Adrenal gland (tissue), 19 donors: ENCODE measurements at regions of chr21 and their contacts with region 1.

Region 1: DNA sequence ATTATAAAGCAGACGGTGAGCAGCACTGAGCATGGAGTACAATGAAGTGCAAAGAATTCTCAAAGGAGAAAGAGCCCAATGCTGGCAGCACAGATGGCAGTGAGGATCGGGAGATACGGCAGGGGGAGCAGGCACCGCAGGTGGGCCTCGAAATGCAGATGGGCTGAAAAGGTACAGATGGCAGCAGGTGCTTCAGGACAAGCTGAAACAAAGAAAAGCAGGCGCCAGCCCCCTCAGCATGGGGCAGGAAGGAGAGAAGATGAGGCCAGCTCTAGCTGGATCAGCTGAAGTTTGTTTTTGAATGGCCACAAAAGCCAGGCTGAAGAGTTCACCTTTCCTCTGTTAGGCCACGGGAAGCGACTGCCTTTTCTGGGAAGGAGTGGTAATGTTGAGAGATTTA is 7.7 kb downstream of the CFAP298 start:
- DNase-seq: no peak
- H3K4me3 ChIP-seq: no peak overlapping the region
- H3K27ac ChIP-seq: no peak overlapping the region
- H3K4me1 ChIP-seq: no peaks in the 10 kb centered on the region
- H3K27me3 ChIP-seq: no peaks in the 10 kb centered on the region
- CTCF ChIP-seq: no peak
- POLR2A ChIP-seq: no peak

Region 2: GRCh38 chr21:32392880-32393676 is 211.4 kb before region 1 on chr21 and contains the start of gene URB1:
- intact Hi-C with region 1: loop called in 1 of 2 experiments (anchors 5 kb)
- DNase-seq: peak; percentile 86 to 95 (median 93)
- H3K4me3 ChIP-seq: peak within 1 kb of the TSS; percentile 61 to 86 (median 78)
- H3K27ac ChIP-seq: peak within 1 kb of the TSS; percentile 30 to 84 (median 67)
- H3K4me1 ChIP-seq: peaks cover 9 to 19% of the 10 kb centered on the region in 2 donors
- H3K27me3 ChIP-seq: no peaks in the 10 kb centered on the region
- CTCF ChIP-seq: no peak
- POLR2A ChIP-seq: peak; percentile 45 to 64
- total RNA-seq, gene URB1: 12.4 to 31.6 (median 16.9) TPM

Region 3: GRCh38 chr21:32520875-32521735 is 83.4 kb before region 1 on chr21:
- intact Hi-C with region 1: no loop called
- DNase-seq: peak; percentile 48 to 91 (median 73)
- H3K4me3 ChIP-seq: no peak overlapping the region
- H3K27ac ChIP-seq: peak overlapping the region in 3 of 5 donors; percentile 26 to 87 (median 58)
- H3K4me1 ChIP-seq: peaks cover 0 to 16% of the 10 kb centered on the region in 2 donors
- H3K27me3 ChIP-seq: no peaks in the 10 kb centered on the region
- CTCF ChIP-seq: no peak
- POLR2A ChIP-seq: no peak

Region 4: DNA sequence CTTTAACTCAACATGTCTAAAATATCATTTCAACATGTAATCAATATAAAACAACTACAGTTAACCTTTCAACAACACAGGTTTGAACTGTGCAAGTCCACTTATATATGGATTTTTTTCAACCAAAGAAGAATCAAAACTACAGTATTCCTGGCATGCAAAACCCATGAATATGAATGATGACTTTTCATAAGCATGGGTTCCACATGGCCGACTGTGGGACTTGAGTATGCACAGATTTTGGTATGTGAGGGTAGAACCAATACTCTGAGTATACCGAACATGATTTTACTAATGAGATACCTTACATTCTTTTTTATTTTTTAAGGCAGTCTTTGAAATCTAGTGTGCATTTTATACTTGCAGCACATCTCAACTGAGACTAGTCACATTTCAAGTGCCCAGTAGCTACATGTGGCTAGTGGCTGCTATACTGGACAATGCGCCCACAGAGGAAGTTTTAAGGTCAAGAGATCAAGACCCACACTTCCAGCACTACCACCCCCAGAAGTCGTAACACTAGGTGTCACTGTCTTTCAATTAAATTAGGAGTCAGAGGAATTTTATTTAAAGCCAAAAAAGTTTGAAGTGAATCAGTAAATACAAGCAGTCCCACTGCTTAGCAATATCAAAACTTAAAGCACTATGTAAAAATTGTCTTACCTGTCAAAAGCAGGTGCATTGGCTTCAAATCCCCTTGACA is 83.3 kb after region 1 on chr21:
- intact Hi-C with region 1: no loop called
- DNase-seq: no peak
- H3K4me3 ChIP-seq: no peak overlapping the region
- H3K27ac ChIP-seq: no peak overlapping the region
- H3K4me1 ChIP-seq: peaks cover 0 to 5% of the 10 kb centered on the region in 2 donors
- H3K27me3 ChIP-seq: no peaks in the 10 kb centered on the region
- CTCF ChIP-seq: no peak
- POLR2A ChIP-seq: no peak

Region 5: DNA sequence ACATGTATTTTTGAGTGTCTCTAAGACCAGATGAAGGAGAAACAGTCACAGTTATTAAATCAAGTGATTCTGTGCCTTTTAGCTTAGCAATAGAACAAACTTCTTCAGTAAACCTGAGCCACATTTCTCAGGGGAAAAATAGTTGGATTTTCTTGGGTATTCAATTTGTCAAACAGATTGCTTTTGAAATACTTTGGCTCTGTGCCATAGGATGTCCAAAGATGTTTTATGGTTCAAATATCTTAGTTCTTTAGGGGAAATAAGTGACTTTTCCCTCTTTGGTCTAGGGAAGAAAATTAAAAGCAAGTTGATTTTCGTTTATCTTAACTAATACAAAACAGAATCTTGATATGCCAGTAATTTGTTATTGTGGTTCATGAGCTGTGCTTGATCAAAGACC is 1185.2 kb after region 1 on chr21:
- intact Hi-C with region 1: no loop called
- DNase-seq: no peak
- H3K4me3 ChIP-seq: no peak overlapping the region
- H3K27ac ChIP-seq: no peak overlapping the region
- H3K4me1 ChIP-seq: peaks cover 11 to 16% of the 10 kb centered on the region in 2 donors
- H3K27me3 ChIP-seq: no peaks in the 10 kb centered on the region
- CTCF ChIP-seq: no peak
- POLR2A ChIP-seq: no peak